Left lung (tissue), 14 donors: ENCODE measurements at regions of chr2 and their contacts with region 1.

Region 1: DNA sequence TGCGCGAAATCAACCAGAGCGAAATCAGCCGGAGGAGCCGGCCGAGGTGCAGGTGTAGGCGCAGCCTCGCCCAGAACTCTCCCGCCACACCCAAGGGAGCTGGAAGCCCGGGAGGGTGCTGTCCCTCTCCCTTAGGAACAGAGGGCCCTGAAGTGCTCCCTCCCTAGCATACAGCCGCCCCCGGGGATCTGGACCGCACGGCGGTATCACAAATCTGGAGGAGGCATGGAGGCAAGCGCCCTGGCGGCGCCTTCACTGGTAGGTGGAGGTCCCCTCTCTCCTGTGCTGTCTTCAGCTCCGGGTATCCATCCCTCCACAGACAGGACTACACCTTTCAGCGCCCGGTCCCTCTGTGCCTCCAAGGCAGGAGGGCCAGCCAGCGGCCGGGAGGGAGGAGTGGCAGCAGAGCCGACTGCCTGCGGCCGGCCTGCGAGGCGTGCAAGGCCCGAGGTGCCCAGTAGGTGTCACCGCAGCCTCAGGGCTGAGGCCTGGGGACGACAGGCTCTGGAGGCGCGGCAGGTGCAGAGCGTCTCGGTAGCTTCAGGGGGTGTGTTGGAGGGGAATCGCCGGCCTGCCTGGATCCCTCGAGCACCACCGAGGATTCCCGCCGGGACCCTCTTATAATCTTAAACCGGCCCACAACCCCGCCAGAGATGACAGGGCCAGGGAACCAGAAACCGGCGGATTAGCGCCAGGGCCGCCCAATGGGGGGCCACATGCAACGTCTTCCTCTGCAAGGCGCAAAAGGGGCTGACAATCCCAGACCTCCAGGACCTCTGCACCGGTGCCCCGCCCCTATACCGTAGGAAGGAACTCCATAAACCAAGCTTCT is 2.8 kb downstream of the IHH start:
- DNase-seq: peak; percentile 46 to 94 (median 74)
- ATAC-seq: peak; percentile 94
- H3K4me3 ChIP-seq: peak overlapping the region in 1 of 2 donors; percentile 34
- H3K27ac ChIP-seq: no peak overlapping the region
- H3K4me1 ChIP-seq: peaks cover 29 to 40% of the 10 kb centered on the region in 2 donors
- H3K27me3 ChIP-seq: peaks cover 68 to 87% of the 10 kb centered on the region in 2 donors
- CTCF ChIP-seq: peak; percentile 94 to 96

Region 2: GRCh38 chr2:219119422-219120043 is 61.6 kb after region 1 on chr2:
- intact Hi-C with region 1: loop called in 1 of 2 experiments (anchors 10 kb)
- DNase-seq: peak in 3 of 4 donors; percentile 61 to 66 (median 65)
- ATAC-seq: peak; percentile 67
- H3K4me3 ChIP-seq: no peak overlapping the region
- H3K27ac ChIP-seq: no peak overlapping the region
- H3K4me1 ChIP-seq: peaks cover 13 to 16% of the 10 kb centered on the region in 2 donors
- H3K27me3 ChIP-seq: no peaks in the 10 kb centered on the region
- CTCF ChIP-seq: peak; percentile 58 to 70

Region 3: GRCh38 chr2:219149667-219150066 is 91.7 kb after region 1 on chr2:
- intact Hi-C with region 1: loop called in 1 of 2 experiments (anchors 5 kb)
- DNase-seq: no peak
- ATAC-seq: peak; percentile 34
- H3K4me3 ChIP-seq: no peak overlapping the region
- H3K27ac ChIP-seq: no peak overlapping the region
- H3K4me1 ChIP-seq: peaks cover 0 to 10% of the 10 kb centered on the region in 2 donors
- H3K27me3 ChIP-seq: no peaks in the 10 kb centered on the region
- CTCF ChIP-seq: no peak

Region 4: DNA sequence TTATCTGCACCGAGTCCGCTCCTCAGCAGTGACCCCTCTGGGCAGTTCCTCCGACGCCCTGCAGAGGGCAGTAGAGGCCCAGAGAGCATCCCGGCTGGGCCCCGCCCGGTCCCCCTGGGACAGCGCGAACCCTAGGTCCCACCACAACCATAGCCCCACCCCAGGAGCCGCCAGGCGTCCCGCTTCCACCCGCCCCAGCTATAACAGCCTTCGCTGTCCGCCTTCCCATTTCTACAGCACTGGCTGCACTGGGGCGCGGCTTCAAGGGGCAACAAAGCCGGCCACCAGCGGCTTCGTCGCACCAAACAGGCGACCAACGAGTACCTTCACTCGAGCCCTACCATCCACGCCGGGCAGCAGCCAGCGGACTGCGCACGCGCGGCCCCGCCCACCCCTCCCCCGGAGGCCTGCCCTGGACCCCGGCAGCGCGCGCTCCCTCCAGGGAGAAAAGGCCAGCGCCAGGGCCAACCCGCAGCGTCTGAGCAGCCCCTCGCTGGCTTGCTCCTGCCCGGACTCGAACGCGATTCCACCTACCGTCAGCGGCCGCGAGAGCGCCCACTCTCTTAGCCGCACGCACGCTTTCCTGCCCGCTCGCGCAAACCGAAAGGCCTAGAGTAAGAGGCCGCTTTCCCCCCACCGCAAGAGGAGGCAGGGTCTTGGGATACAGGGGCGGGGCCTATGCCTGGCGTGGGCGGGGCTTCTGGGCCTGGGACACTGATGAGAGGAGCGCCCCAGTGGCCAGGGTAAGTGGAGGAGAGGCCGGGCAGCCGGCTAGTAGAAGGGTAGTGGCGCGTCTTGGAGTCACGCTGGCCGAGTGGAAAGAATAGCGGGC is 102.5 kb after region 1 on chr2 and contains the start of gene NHEJ1:
- intact Hi-C with region 1: no loop called
- DNase-seq: peak; percentile 94 to 99 (median 96)
- ATAC-seq: peak; percentile 98
- H3K4me3 ChIP-seq: peak within 1 kb of the TSS; percentile 54 to 73
- H3K27ac ChIP-seq: peak within 1 kb of the TSS; percentile 93
- H3K4me1 ChIP-seq: peaks cover 4 to 12% of the 10 kb centered on the region in 2 donors
- H3K27me3 ChIP-seq: no peaks in the 10 kb centered on the region
- CTCF ChIP-seq: peak; percentile 99
- polyA plus RNA-seq, gene NHEJ1: 16.3 to 20.9 (median 18.8) TPM

Region 5: DNA sequence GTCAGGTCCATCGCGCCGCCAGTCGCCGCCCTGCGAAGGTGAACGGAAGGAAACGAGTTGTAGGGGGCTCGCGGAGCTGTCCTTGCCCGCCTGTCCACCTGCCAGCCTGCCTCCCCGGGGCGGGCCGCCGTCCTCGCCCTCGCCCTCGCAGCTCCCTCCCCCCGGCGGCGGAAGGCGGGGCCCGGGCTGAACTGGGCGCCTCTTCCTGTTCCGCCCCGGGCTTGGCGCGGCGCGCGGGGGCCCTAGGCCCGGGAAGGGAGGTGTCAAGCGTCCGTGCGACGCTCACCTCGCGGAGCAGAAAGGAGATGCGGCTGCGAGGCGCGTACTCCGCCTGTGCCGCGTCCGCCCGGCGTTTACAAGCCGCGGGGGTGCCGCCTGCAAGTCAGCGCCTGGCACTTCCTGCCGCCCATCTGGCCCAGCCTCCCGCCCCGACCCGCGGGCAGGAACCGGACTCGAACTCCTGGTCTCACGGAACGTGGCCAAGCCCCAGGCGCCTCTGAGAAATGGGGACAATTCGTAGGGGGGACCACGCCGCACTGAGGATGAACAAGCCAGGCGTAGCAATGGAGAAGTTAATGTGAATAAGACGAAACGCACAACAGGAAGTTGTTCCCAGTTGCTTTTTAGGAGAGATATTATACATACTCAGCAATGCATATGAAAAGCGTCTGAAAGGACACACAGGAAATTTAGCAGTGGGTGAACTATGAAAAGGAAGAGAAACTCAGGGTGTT is 119.1 kb after region 1 on chr2 and contains the start of gene CNPPD1:
- intact Hi-C with region 1: no loop called
- DNase-seq: peak; percentile 80 to 99 (median 88)
- ATAC-seq: peak; percentile 91
- H3K4me3 ChIP-seq: peak within 1 kb of the TSS; percentile 98
- H3K27ac ChIP-seq: peak within 1 kb of the TSS; percentile 99 to 100
- H3K4me1 ChIP-seq: peaks cover 18 to 55% of the 10 kb centered on the region in 2 donors
- H3K27me3 ChIP-seq: no peaks in the 10 kb centered on the region
- CTCF ChIP-seq: no peak
- polyA plus RNA-seq, gene CNPPD1: 34.6 to 42.7 (median 40.7) TPM

Region 6: DNA sequence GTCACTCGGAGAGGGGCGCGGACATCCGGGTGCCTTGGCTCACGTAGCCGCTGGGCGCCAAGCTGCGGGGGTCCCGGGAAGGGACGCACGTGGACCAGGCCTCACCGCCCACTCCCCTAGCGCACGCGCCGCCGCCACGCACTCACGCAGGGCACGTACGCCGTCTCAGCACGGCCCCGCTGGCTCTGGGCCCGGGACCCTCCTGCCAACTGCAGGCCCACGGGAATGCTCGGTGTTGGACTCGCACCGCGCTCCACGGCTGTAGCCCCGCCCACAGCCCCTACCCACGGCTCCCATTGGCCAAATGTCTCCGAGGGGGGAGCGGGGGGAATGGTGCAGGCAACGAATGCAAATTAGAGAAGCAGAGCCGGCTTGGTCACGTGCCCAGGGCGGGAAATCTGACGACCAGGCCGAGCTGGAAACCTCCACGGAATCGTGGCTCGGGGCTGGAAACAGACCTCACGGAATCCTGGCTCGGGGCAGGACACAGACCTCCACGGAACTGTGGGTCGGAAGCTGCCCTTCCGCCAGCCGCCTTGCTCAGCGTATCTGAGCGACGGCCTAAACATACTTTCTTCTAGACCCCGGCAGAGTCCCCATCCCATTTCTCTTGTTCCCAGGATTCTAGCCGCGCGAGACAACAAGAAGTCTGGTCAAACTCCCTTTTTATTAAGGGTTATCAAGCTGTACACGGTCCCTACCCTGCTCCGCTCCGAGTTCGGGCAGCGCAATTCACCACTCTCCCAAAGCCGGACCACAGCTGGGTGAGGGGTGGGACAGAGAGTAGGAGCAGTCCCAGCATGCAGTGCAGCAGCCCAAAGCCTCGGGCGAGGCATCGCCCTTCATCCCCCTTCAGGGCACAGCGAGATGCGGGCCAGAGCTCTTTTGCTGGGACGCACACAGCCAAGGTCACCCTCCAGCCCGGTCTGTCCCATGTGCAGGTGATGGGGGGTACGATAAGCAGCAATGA is 161.1 kb after region 1 on chr2 and contains the start of gene ABCB6:
- intact Hi-C with region 1: no loop called
- DNase-seq: peak; percentile 94 to 97 (median 96)
- ATAC-seq: peak; percentile 92
- H3K4me3 ChIP-seq: peak within 1 kb of the TSS; percentile 53 to 68
- H3K27ac ChIP-seq: peak within 1 kb of the TSS; percentile 90 to 92
- H3K4me1 ChIP-seq: peaks cover 17 to 35% of the 10 kb centered on the region in 2 donors
- H3K27me3 ChIP-seq: no peaks in the 10 kb centered on the region
- CTCF ChIP-seq: no peak
- polyA plus RNA-seq, gene ABCB6: 23.2 to 45.3 (median 30.1) TPM

Region 7: DNA sequence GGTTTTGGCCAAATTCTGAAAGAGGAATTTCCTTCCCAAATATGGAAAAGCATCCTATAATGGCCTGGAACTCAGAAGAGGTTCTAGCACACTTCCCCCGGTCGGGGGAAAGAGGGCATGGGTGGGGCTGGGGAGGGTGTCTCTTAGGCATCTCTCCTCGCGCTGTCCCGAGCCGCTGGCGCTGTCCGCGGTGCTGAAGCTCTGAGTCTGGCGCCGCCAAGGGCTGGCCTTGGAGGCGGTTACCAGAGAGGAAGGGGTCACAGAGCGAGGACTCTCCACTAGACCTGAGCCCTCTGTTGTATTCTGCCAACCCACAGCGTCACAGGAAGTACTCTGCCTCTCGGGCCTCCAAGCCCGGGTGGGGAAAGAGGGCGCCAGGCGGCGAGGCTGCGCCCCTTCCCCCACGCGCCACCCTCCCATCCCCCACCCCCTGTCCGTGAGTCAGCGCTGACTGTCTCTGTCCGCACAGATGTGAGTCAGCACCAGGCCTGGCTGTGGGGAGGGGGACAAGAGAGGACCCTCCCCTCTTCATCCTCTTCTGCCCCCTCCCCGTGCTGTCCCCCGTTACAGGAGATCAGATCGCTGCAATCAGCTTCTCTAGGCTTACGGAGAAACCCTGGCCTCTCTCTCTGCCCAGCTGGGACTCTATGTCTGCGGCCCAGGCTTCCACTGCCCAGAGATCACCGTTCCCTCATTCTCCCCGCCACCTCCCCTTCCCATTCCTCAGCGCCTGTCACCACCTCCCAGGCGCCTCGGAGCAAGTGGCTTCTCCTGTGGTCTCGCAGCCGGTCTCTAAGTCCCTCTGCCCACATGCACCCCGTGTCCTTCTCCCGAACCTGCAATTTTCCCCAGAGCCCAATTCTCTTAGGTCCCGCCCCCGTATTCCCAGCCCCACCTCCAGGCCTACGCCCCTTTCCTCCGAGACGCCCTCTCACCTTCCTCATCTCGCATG is 250.5 kb after region 1 on chr2:
- intact Hi-C with region 1: loop called in 1 of 2 experiments (anchors 10 kb)
- DNase-seq: peak in 3 of 4 donors; percentile 61 to 88 (median 73)
- ATAC-seq: peak; percentile 93
- H3K4me3 ChIP-seq: no peak overlapping the region
- H3K27ac ChIP-seq: no peak overlapping the region
- H3K4me1 ChIP-seq: no peaks in the 10 kb centered on the region
- H3K27me3 ChIP-seq: peaks cover 29 to 83% of the 10 kb centered on the region in 2 donors
- CTCF ChIP-seq: no peak